ENCODE measurements at regions of chr10 and their contacts with region 1.

Region 1: GRCh38 chr10:100890673-100891317 is 22.0 kb upstream of the SLF2 start:
- DNase-seq: peak; percentile 64
- H3K4me3 ChIP-seq: no peak overlapping the region
- H3K27ac ChIP-seq: peak overlapping the region; percentile 86
- H3K4me1 ChIP-seq: peaks cover 16% of the 10 kb centered on the region
- H3K27me3 ChIP-seq: peaks cover 15 to 30% of the 10 kb centered on the region in 2 experiments
- CTCF ChIP-seq: no peak
- POLR2A ChIP-seq: no peak

Region 2: GRCh38 chr10:100912605-100913469 is 22.0 kb after region 1 on chr10 and contains the start of gene SLF2:
- CTCF ChIA-PET with region 1: interaction called, 4 read pairs
- POLR2A ChIA-PET with region 1: no interaction called
- dilution Hi-C with region 1: no loop called
- intact Hi-C with region 1: loop called (anchors 1 kb)
- DNase-seq: peak; percentile 99
- H3K4me3 ChIP-seq: peak within 1 kb of the TSS; percentile 52 to 99 (median 88)
- H3K27ac ChIP-seq: peak within 1 kb of the TSS; percentile 76
- H3K4me1 ChIP-seq: peaks cover 35% of the 10 kb centered on the region
- H3K27me3 ChIP-seq: no peaks in the 10 kb centered on the region
- CTCF ChIP-seq: no peak
- POLR2A ChIP-seq: peak; percentile 53
- total RNA-seq, gene SLF2: 28.0 and 35.5 TPM in 2 replicates

Measured in endothelial cell of umbilical vein (primary cell).